ENCODE measurements at regions of chr9 and their contacts with region 1.

Region 1: DNA sequence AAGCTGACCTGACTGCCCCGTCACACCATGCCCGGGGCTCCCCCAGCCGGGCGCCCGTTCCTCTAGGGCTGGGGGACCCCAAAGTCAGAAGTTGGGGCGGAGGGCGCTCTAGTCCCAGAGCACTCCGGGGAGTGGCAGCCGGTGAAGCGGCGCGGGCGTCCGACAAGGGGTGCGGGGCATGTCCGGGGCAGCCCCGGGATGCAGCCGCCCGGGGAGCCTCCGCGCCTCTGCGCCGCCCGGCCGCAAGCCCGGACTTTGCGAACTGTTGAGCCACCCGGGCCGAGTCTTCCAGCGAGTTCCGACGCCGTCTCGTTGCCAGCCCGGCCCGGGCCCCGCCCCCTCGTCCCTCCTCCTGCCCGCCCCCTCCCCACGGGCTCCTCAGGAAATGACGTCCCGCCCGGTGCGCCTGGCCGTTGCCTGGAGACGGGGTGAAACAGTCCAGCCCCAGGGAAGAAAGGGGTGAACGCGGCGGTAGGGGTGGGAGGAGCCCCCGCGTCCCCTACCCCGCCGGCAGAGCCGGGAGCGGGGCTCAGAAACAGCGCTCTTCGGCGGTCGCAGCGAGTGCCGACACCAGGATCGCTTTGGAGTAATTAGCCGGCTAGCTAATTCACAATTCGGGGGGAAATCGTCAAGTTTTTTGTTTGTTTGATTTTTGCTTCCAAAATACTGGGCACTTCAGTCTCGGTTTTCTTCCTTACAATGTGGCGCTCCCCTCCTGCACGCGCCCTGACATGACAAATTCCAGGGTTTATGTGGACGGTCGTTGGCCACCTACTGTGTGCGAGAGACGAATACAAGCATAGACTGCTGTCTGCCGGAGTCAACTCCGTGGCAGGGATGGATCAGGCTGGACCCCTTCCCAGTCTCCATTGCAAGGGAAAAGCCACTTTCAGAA is at the start of gene WHRN:
- DNase-seq: peak; percentile 67 to 94 (median 90)
- H3K4me3 ChIP-seq: peak within 1 kb of the TSS; percentile 43 to 87 (median 73)
- H3K27ac ChIP-seq: peak within 1 kb of the TSS in 56 of 59 donors; percentile 45 to 98 (median 92)
- H3K27me3 ChIP-seq: peaks cover 0 to 26% (median 0%) of the 10 kb centered on the region in 45 donors
- CTCF ChIP-seq: peak in 15 of 56 donors; percentile 4 to 35 (median 15)
- total RNA-seq, gene WHRN: 8.2 to 129 (median 33.9) TPM

Region 2: GRCh38 chr9:114339130-114339908 is 166.1 kb before region 1 on chr9:
- intact Hi-C with region 1: loop called in 1 of 2 experiments (anchors 5 kb)
- DNase-seq: peak in 4 of 10 donors; percentile 39 to 72 (median 55)
- H3K4me3 ChIP-seq: no peak overlapping the region
- H3K27ac ChIP-seq: no peak overlapping the region
- H3K27me3 ChIP-seq: no peaks in the 10 kb centered on the region
- CTCF ChIP-seq: peak; percentile 30 to 85 (median 73)

Region 3: DNA sequence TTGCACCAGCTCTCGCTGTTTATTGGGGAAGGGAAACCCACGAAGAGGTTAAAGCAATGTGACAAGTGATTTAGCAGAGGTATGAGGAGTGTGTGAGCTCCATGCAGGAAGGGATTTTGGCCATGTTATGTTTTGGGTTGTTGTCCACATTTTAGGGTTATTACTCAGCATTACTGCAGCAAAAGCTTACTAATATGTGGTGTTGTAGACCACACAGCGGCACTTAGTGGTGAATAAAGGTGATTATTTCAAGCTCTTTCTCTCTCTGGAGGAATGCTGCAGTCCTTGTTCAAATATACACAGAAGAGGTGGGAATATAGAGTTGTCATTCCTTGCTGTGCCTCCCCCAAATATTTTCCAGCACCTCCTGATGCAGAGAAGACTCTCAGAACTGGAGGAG is 87.9 kb before region 1 on chr9:
- intact Hi-C with region 1: no loop called
- DNase-seq: no peak
- H3K4me3 ChIP-seq: no peak overlapping the region
- H3K27ac ChIP-seq: peak overlapping the region in 9 of 59 donors; percentile 2 to 62 (median 19)
- H3K27me3 ChIP-seq: no peaks in the 10 kb centered on the region
- CTCF ChIP-seq: no peak

Region 4: DNA sequence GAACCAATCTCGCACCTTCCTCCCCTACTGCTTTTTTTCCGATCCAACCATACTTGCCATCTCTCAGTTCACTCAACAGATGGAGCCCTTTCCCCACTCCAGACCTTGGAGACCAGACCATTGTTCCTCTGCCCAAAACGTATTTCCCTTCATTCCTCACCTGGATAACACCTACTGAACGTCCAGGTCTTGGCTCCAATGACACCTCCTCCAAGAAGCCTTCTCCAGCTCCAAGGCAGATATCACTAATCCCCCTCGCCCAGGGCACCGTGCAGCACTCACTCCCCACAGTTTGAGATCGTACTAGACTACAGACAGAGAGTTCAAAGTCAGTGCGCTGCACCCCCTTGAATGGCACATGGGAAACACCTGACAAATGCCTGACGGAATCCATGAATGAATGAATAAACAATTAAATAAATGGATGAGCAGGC is 70.5 kb before region 1 on chr9:
- intact Hi-C with region 1: loop called in 1 of 2 experiments (anchors 2 kb)
- DNase-seq: peak in 3 of 10 donors; percentile 22 to 33 (median 26)
- H3K4me3 ChIP-seq: peak overlapping the region in 5 of 59 donors; percentile 8 to 11 (median 9)
- H3K27ac ChIP-seq: peak overlapping the region in 26 of 59 donors; percentile 4 to 74 (median 46)
- H3K27me3 ChIP-seq: no peaks in the 10 kb centered on the region
- CTCF ChIP-seq: peak in 55 of 56 donors; percentile 29 to 78 (median 63)

Region 5: DNA sequence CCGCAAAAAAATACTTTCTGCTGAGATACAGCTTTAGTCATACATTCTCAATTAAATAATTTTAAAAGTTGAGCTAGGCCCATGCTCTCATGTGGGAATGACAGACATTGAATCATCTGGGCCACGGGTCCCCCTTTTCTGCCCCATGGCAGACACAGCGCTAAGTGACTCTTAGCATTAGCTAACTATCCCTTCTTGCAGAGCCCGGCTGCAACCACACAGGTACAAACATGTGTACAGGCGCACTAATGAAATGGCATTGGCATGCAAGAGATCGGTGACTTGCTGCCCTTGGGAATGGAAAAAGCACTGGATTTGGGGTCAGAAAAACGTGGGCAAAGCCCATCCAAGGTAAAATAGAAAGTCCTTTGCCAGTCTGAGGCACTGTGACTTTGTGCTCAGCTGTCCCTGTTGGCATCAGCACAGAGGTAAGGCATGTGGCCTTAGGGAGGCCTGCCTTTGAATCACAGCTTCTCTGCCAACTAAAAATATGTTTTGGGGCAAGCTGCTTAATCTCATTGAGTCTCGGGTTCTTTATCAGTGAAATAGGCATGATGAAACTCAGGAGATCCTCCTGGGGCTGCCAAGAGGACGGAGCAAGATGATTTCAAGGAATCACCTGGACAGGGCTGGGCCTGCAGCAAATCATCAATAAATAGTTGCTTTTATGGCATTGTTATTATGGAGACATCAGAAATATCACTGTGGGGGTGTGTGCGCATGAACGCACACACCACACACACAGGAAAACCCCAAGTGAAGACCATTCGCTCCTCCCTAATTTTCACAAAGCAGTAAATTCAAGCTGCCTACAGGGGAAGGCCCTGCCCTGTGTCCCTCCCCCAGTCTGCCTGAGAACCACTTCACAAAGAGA is 54.4 kb before region 1 on chr9:
- intact Hi-C with region 1: no loop called
- DNase-seq: no peak
- H3K4me3 ChIP-seq: no peak overlapping the region
- H3K27ac ChIP-seq: peak overlapping the region in 9 of 59 donors; percentile 16 to 98 (median 93)
- H3K27me3 ChIP-seq: no peaks in the 10 kb centered on the region
- CTCF ChIP-seq: no peak

Region 6: DNA sequence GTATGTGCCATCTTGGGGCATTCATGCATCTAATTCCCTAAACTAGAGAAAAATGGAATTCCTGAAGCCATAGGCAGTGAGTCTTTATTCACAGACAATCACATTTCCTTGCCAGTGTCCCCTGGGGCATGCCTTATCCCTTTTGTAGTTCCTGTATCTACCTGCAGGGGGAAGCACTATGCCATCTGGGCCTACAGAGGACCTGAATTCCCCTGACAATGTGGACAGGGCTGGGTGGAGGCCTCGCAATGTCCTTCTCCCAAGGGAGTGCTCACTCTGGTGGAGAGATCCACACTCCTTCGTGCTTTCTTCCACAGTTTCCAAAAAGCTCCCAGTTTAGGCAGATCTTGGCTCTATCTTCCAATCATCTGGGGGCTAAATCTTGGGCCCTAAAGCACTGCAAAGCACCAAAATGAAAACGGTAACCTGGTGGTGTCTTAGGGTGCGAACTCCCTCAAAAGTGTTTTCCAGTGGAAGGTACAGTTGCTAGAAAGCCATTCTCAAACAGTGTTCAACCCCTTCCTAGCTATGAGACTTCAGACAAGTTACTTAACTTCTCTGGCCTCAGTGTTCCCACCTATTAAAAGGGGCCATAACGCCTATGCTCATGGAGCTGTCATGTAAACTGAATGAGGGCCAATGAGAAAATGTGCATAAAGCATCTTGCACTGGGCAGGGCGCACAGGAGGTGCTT is 17.7 kb before region 1 on chr9:
- intact Hi-C with region 1: loop called in 1 of 2 experiments (anchors 2 kb)
- DNase-seq: peak in 6 of 10 donors; percentile 14 to 70 (median 59)
- H3K4me3 ChIP-seq: no peak overlapping the region
- H3K27ac ChIP-seq: peak overlapping the region in 18 of 59 donors; percentile 4 to 55 (median 36)
- H3K27me3 ChIP-seq: no peaks in the 10 kb centered on the region
- CTCF ChIP-seq: peak; percentile 61 to 92 (median 85)